ENCODE measurements at regions of chr3 and their contacts with region 1.

Region 1: DNA sequence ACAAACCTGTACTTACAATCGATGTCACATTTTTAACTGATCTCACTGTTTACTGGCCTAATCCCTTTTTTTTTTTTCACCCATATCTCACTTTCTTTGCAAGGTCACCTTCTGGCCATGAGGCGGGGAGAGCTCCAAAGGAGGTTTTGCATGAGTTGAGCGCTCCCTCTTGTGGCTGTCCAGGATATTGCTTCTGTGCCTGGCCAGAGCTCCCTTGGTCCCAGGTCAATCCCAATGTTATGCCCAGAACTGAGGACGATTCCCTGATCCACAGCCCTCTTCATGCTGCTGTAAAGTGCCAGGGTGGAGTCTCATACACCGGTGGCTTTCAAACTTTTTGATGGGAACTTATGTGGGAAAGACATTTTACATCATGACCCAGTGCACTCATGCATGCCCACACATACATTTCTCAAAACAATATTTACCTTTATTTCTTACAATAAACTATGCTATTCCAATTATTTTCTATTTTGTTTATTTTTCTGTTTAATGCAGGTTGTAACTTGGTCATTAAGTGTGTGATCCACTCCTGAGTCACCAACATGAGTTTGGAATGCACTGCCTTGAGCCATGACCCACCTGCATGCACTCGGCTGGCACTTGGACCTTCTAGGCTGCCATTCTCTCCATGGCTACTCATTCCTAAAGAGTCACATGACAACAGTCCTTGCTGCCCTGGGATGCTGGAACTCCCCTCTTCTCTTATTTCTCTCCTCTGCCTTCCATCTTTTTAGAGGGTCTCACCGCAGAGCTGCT is 9.6 kb upstream of the SST start:
- DNase-seq: peak; percentile 68
- ATAC-seq: peak; percentile 97
- H3K4me3 ChIP-seq: no peak overlapping the region
- H3K27ac ChIP-seq: no peak overlapping the region
- H3K4me1 ChIP-seq: no peaks in the 10 kb centered on the region
- H3K27me3 ChIP-seq: peaks cover 29% of the 10 kb centered on the region
- CTCF ChIP-seq: peak; percentile 94
- POLR2A ChIP-seq: no peak
- RAD21 ChIP-seq: peak; percentile 94

Region 2: DNA sequence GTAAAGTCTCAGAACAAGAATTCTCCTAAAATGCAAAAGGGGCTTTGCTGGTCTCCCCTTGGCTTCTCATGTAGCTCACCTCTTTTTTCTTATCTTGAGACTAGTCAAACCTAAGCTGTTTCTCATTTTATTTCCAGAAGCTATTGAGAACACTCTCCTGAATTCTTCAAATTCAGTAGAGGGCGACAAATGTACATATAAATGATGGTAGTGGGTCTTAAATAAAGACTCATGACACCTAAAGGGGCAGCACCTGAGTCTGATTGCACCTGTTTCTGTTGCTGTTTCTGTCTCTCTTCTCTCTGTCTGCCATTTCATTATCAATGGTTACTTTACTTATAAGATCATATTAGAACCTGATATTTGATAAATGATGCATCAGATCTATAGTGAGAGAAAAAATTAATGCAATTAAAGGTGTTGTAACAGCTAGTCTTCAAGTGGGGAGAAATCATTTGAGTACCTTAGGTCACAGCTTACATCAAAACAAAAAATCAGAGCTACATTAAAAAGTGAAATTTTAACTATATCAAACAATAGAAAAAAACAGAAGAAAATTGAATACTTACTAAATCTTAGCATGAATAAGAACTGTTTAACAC is 830.3 kb before region 1 on chr3:
- CTCF ChIA-PET with region 1: no interaction called
- POLR2A ChIA-PET with region 1: no interaction called
- dilution Hi-C with region 1: no loop called
- in situ Hi-C with region 1: no loop called
- intact Hi-C with region 1: loop called (anchors 10 kb)
- DNase-seq: peak; percentile 38
- ATAC-seq: 0 out of 2 replicates have a peak, but pooled peaks have one; percentile 37
- H3K4me3 ChIP-seq: no peak overlapping the region
- H3K27ac ChIP-seq: no peak overlapping the region
- H3K4me1 ChIP-seq: no peaks in the 10 kb centered on the region
- H3K27me3 ChIP-seq: peaks cover 32% of the 10 kb centered on the region
- CTCF ChIP-seq: peak; percentile 42
- POLR2A ChIP-seq: no peak
- RAD21 ChIP-seq: peak; percentile 45

Region 3: DNA sequence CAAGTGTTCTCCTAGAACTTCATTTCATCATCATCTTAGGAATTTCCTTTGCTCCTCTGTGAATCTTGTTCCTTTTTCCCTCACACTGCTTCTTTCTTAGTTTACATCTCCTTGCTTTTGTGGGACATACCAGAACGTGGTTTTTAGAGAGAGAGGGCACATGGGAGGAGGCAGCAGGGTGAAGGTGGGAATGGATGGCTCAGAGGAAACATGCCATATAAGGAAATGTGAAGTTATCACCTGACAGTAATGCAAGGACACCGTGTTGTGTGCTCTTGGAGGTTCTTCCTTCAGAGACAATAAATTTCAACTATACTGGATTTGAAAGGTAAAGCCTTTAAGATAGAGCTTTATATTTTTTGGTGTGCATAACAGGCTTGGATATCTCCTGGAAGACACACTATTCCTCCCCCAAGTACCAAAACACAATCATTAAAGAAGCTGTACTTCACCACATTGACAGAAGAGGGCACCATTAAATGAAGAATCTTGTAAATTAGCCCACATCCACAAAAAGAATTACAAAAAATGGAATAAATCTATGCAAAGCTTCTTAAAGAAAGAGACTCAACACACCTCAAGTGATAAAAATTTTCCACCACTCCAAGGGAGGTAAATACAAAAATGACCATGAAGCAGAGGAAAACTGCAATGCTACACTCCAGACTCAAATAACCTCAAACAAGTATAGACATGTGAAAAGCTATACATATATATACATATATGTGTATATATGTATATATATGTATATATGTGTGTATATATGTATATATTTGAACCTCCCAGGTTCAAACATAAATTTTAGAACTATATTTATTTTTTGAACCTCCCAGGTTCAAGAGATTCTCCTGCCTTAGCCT is 566.7 kb before region 1 on chr3:
- CTCF ChIA-PET with region 1: interaction called, 5 read pairs
- POLR2A ChIA-PET with region 1: no interaction called
- dilution Hi-C with region 1: no loop called
- in situ Hi-C with region 1: no loop called
- intact Hi-C with region 1: loop called (anchors 1 kb)
- DNase-seq: peak; percentile 48
- ATAC-seq: peak; percentile 86
- H3K4me3 ChIP-seq: no peak overlapping the region
- H3K27ac ChIP-seq: no peak overlapping the region
- H3K4me1 ChIP-seq: no peaks in the 10 kb centered on the region
- H3K27me3 ChIP-seq: no peaks in the 10 kb centered on the region
- CTCF ChIP-seq: peak; percentile 57
- POLR2A ChIP-seq: no peak
- RAD21 ChIP-seq: peak; percentile 56

Region 4: GRCh38 chr3:187210545-187211327 is 469.1 kb before region 1 on chr3:
- CTCF ChIA-PET with region 1: interaction called, 6 read pairs
- POLR2A ChIA-PET with region 1: no interaction called
- dilution Hi-C with region 1: loop called (anchors 25 kb)
- in situ Hi-C with region 1: no loop called
- intact Hi-C with region 1: no loop called
- DNase-seq: peak; percentile 41
- ATAC-seq: peak; percentile 83
- H3K4me3 ChIP-seq: no peak overlapping the region
- H3K27ac ChIP-seq: no peak overlapping the region
- H3K4me1 ChIP-seq: peaks cover 8% of the 10 kb centered on the region
- H3K27me3 ChIP-seq: no peaks in the 10 kb centered on the region; the same call in 1 of the 2 replicates
- CTCF ChIP-seq: no peak
- POLR2A ChIP-seq: no peak
- RAD21 ChIP-seq: no peak

Region 5: DNA sequence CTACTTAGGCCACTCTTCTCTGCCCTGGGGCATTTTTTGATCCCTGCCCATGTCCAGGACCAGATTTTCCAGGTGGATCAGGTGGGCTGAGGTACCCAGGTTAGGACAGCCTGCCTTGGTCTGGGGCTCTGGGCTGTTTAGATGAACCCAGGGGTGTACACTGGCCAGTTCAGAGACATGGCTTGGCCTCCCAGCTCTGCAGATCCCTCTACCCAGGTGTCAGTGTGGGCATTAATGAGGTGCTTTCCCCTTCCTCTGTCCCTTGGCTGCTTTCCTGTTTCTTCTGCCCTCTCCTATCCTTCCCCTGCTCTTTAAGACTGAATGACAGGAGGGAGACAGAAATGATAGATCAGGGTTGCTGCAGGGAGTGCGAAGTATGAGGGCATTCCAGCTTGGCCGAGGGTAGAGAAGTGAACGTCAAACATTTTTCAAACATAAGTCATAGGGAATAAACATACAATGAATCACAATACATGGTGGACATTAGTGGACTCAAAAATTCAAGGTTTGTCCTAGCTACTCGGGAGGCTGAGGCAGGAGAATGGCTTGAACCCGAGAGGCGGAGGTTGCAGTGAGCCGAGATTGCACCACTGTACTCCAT is 452.1 kb before region 1 on chr3:
- CTCF ChIA-PET with region 1: interaction called, 15 read pairs
- POLR2A ChIA-PET with region 1: no interaction called
- dilution Hi-C with region 1: loop called (anchors 25 kb)
- in situ Hi-C with region 1: loop called (anchors 5 kb)
- intact Hi-C with region 1: no loop called
- DNase-seq: peak; percentile 86
- ATAC-seq: peak; percentile 84
- H3K4me3 ChIP-seq: no peak overlapping the region
- H3K27ac ChIP-seq: peak overlapping the region; percentile 8; the same call in 1 of the 2 replicates
- H3K4me1 ChIP-seq: peaks cover 17% of the 10 kb centered on the region
- H3K27me3 ChIP-seq: no peaks in the 10 kb centered on the region
- CTCF ChIP-seq: no peak
- POLR2A ChIP-seq: no peak
- RAD21 ChIP-seq: no peak

Region 6: GRCh38 chr3:187616307-187616972 is 63.4 kb before region 1 on chr3:
- CTCF ChIA-PET with region 1: interaction called, 9 read pairs
- POLR2A ChIA-PET with region 1: no interaction called
- dilution Hi-C with region 1: no loop called
- in situ Hi-C with region 1: no loop called
- intact Hi-C with region 1: loop called (anchors 1 kb)
- DNase-seq: peak; percentile 55
- ATAC-seq: peak; percentile 72
- H3K4me3 ChIP-seq: no peak overlapping the region
- H3K27ac ChIP-seq: no peak overlapping the region
- H3K4me1 ChIP-seq: no peaks in the 10 kb centered on the region
- H3K27me3 ChIP-seq: peaks cover 5% of the 10 kb centered on the region
- CTCF ChIP-seq: peak; percentile 60
- POLR2A ChIP-seq: no peak
- RAD21 ChIP-seq: peak; percentile 46

Region 7: DNA sequence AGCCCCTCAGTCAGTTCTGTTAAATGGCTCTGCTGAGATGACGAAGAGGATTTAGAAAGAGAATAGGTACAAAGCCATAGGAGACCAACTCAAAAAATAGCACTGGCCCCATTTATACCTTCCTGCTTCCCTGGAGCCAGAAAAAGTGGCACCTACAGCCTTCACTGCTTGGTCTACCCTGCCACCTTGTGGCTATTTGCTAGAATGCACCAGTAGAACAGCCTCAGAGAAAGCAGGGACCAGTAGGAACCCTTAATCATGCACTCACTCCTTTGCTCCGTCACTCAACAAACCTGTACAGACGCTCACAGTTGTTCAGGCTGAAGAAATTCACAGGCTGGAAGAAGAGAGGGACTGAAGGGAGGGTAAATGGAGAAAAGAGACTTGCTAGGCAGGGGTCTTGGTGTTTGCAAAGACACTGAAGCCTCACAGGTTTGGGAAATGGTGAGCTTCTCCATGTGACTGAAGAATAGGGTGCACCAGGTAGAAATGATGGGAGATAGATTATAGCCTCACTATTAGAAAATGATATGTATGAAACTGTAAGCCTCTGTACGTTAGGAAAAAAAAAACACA is 34.7 kb after region 1 on chr3:
- CTCF ChIA-PET with region 1: interaction called, 3 read pairs
- POLR2A ChIA-PET with region 1: no interaction called
- dilution Hi-C with region 1: no loop called
- in situ Hi-C with region 1: no loop called
- intact Hi-C with region 1: loop called (anchors 1 kb)
- DNase-seq: peak; percentile 73
- ATAC-seq: peak; percentile 93
- H3K4me3 ChIP-seq: no peak overlapping the region
- H3K27ac ChIP-seq: no peak overlapping the region
- H3K4me1 ChIP-seq: no peaks in the 10 kb centered on the region
- H3K27me3 ChIP-seq: peaks cover 7% of the 10 kb centered on the region
- CTCF ChIP-seq: peak; percentile 92
- POLR2A ChIP-seq: peak; percentile 43; the same call in 1 of the 2 replicates
- RAD21 ChIP-seq: peak; percentile 99

Region 8: GRCh38 chr3:187777331-187777941 is 97.6 kb after region 1 on chr3:
- CTCF ChIA-PET with region 1: no interaction called
- POLR2A ChIA-PET with region 1: no interaction called
- dilution Hi-C with region 1: no loop called
- in situ Hi-C with region 1: no loop called
- intact Hi-C with region 1: no loop called
- DNase-seq: peak; percentile 27
- ATAC-seq: no peak
- H3K4me3 ChIP-seq: no peak overlapping the region
- H3K27ac ChIP-seq: no peak overlapping the region
- H3K4me1 ChIP-seq: peaks cover 2% of the 10 kb centered on the region; the same call in 1 of the 2 replicates
- H3K27me3 ChIP-seq: no peaks in the 10 kb centered on the region
- CTCF ChIP-seq: no peak
- POLR2A ChIP-seq: no peak
- RAD21 ChIP-seq: no peak

Region 9: GRCh38 chr3:188594139-188594538 is 914.3 kb after region 1 on chr3:
- CTCF ChIA-PET with region 1: no interaction called
- POLR2A ChIA-PET with region 1: no interaction called
- dilution Hi-C with region 1: no loop called
- in situ Hi-C with region 1: no loop called
- intact Hi-C with region 1: no loop called
- DNase-seq: peak; percentile 95
- ATAC-seq: peak; percentile 89
- H3K4me3 ChIP-seq: no peak overlapping the region
- H3K27ac ChIP-seq: peak overlapping the region; percentile 45
- H3K4me1 ChIP-seq: peaks cover 9% of the 10 kb centered on the region
- H3K27me3 ChIP-seq: no peaks in the 10 kb centered on the region
- CTCF ChIP-seq: no peak
- POLR2A ChIP-seq: no peak
- RAD21 ChIP-seq: no peak